Activated CD4-positive, alpha-beta T cell treated with anti-CD3 and anti-CD28 coated beads for 36 hours (primary cell): ENCODE measurements at regions of chr15 and their contacts with region 1.

Region 1: DNA sequence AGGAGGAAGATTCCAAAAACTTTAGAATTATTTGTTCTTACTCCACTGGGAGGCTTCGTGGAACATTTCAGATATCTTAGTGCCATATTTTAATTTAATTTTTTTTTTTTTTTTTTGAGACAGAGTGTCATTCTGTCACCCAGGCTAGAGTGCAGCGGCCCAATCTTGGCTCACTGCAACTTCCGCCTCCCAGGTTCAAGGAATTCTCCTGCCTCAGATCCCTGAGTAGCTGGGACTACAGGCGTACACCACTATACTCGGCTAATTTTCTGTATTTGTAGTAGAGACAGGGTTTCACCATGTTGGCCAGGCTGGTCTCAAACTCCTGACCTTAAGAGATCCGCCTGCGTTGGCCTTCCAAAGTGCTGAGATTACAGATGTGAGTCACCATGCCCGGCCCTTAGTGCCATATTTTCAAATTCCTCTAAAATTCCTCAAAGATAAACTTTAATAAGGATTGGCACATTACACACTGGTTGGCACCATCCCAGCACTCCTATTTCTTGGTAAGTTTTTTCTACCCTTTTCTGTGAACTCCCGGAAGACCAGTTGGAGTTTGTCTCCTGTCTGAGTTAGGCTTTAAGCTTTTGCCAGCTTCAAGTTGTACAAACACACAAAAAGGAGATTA is 693.7 kb downstream of the MCTP2 start:
- DNase-seq: no peak
- ATAC-seq: no peak
- H3K4me3 Mint-ChIP-seq: no peak overlapping the region
- H3K27ac Mint-ChIP-seq: no peak overlapping the region
- H3K4me1 Mint-ChIP-seq: no peaks in the 10 kb centered on the region
- H3K27me3 Mint-ChIP-seq: no peaks in the 10 kb centered on the region

Region 2: GRCh38 chr15:94910166-94910565 is 14.9 kb before region 1 on chr15:
- CTCF ChIA-PET with region 1: no interaction called
- POLR2A ChIA-PET with region 1: no interaction called
- intact Hi-C with region 1: loop called in 1 of 2 experiments (anchors 1 kb)
- DNase-seq: no peak
- ATAC-seq: no peak
- H3K4me3 Mint-ChIP-seq: no peak overlapping the region
- H3K27ac Mint-ChIP-seq: no peak overlapping the region
- H3K4me1 Mint-ChIP-seq: no peaks in the 10 kb centered on the region
- H3K27me3 Mint-ChIP-seq: no peaks in the 10 kb centered on the region

Region 3: DNA sequence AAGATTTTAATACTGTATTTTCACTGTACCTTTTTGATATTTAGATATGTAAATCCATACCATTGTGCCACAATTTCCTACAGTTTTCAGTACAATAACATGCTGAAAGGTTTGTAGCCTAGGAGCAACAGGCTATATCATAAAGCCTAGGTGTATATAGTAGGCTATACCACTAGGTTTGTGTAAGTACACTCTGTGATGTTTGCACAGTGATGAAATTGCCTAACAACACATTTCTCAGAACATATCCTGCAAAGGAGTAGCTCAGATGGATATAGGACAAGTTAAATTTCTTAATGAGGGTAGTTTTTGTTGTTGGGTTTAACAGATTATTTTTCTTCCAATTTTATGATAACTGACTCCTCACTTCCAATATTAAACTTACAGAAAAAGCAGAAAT is 11.7 kb after region 1 on chr15:
- CTCF ChIA-PET with region 1: no interaction called
- POLR2A ChIA-PET with region 1: no interaction called
- intact Hi-C with region 1: no loop called
- DNase-seq: no peak
- ATAC-seq: no peak
- H3K4me3 Mint-ChIP-seq: no peak overlapping the region
- H3K27ac Mint-ChIP-seq: no peak overlapping the region
- H3K4me1 Mint-ChIP-seq: no peaks in the 10 kb centered on the region
- H3K27me3 Mint-ChIP-seq: no peaks in the 10 kb centered on the region